T-cell (primary cell): ENCODE measurements at regions of chr18 and their contacts with region 1.

Region 1: DNA sequence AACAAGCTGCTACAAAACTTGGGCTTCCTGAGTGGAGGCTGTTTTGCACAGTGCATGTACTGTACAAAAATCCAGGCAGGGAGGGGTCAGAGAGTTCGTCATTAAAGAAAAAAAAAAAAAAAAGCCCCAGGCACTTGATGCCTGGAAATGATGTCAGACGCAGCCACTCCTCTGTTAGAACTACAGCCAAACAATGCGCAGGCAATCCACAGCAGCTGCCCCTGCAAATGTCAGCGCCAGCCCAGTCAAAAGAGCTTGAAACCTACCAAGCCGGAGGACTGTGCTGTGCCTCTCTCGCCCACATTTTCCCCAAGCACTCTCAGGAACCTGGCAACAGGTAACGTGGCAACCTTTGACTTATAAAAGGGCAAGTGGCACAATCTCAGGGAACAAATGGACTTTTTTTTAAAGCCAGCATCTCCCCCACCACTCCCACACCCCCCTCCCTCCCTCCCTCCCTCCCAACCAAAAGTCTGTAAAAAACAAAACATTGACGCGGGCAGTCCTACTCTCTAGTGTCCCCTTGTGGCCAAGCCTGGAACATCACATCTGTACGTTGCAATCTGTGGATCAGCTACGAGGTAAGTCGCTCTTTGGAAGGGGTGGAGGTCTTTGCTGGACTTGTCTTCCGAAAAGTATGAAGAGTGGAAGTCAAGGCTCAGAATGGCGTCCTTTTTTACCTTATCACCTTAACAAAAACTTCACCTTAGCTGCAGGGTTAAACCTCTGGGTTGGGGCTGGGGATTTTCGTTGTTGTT is 144.1 kb downstream of the TGIF1 start:
- DNase-seq: peak; percentile 76 to 95 (median 88)
- ATAC-seq: peak; percentile 85 to 89 (median 86)
- H3K4me3 ChIP-seq: peak overlapping the region; percentile 58 to 63
- H3K4me3 Mint-ChIP-seq: peak overlapping the region; percentile 87 to 95 (median 91)
- H3K27ac ChIP-seq: peak overlapping the region; percentile 98
- H3K27ac Mint-ChIP-seq: peak overlapping the region; percentile 98 to 99
- H3K4me1 ChIP-seq: peaks cover 27 to 59% of the 10 kb centered on the region in 2 experiments
- H3K4me1 Mint-ChIP-seq: peaks cover 45 to 66% (median 56%) of the 10 kb centered on the region in 3 donors
- H3K27me3 ChIP-seq: no peaks in the 10 kb centered on the region
- H3K27me3 Mint-ChIP-seq: no peaks in the 10 kb centered on the region

Region 2: GRCh38 chr18:3297025-3297984 is 296.8 kb before region 1 on chr18:
- CTCF ChIA-PET with region 1: interaction called, 5 to 31 read pairs
- POLR2A ChIA-PET with region 1: interaction called in 1 of 2 experiments, 12 read pairs
- DNase-seq: peak; percentile 84 to 95 (median 91)
- ATAC-seq: peak; percentile 95 to 100 (median 98)
- H3K4me3 ChIP-seq: peak overlapping the region; percentile 73 to 77
- H3K4me3 Mint-ChIP-seq: peak overlapping the region; percentile 93 to 94 (median 94)
- H3K27ac ChIP-seq: no peak overlapping the region
- H3K27ac Mint-ChIP-seq: peak overlapping the region; percentile 82 to 90
- H3K4me1 ChIP-seq: peaks cover 4 to 14% of the 10 kb centered on the region in 2 experiments
- H3K4me1 Mint-ChIP-seq: peaks cover 11 to 14% (median 13%) of the 10 kb centered on the region in 3 donors
- H3K27me3 ChIP-seq: peaks cover 0 to 4% of the 10 kb centered on the region in 2 experiments
- H3K27me3 Mint-ChIP-seq: peaks cover 29 to 32% of the 10 kb centered on the region in 2 donors

Region 3: DNA sequence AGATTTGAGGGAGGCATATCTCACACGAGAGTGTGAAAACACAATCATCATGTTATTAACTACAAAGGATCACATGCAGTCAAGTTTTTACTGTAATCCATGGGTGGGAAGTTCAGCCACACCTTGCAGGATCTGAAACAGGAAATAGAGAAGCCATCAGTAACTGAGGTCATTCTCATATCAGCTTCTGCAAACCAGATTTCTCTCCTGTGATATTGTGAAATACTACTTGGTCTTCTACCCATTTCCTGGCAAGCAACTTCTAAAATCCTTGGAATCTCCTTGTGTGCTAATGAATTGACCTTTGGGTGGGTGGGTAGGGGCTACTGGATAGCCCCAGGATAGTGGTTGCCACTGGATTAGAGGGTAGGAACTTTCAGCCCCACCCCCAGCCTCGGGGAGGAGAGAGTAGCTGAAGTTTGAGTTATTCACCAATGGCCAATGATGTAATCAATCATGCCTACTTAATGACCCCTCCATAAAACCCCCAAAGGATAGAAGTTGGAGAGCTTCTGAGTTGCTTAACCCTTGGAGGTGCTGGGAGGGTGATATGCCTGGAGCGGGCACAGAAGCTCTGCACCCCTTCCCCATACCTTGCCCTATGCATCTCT is 169.7 kb before region 1 on chr18:
- CTCF ChIA-PET with region 1: interaction called in 1 of 2 experiments, 10 read pairs
- POLR2A ChIA-PET with region 1: no interaction called
- DNase-seq: no peak
- ATAC-seq: no peak
- H3K4me3 ChIP-seq: no peak overlapping the region
- H3K4me3 Mint-ChIP-seq: no peak overlapping the region
- H3K27ac ChIP-seq: no peak overlapping the region
- H3K27ac Mint-ChIP-seq: no peak overlapping the region
- H3K4me1 ChIP-seq: no peaks in the 10 kb centered on the region
- H3K4me1 Mint-ChIP-seq: no peaks in the 10 kb centered on the region
- H3K27me3 ChIP-seq: no peaks in the 10 kb centered on the region
- H3K27me3 Mint-ChIP-seq: no peaks in the 10 kb centered on the region

Region 4: DNA sequence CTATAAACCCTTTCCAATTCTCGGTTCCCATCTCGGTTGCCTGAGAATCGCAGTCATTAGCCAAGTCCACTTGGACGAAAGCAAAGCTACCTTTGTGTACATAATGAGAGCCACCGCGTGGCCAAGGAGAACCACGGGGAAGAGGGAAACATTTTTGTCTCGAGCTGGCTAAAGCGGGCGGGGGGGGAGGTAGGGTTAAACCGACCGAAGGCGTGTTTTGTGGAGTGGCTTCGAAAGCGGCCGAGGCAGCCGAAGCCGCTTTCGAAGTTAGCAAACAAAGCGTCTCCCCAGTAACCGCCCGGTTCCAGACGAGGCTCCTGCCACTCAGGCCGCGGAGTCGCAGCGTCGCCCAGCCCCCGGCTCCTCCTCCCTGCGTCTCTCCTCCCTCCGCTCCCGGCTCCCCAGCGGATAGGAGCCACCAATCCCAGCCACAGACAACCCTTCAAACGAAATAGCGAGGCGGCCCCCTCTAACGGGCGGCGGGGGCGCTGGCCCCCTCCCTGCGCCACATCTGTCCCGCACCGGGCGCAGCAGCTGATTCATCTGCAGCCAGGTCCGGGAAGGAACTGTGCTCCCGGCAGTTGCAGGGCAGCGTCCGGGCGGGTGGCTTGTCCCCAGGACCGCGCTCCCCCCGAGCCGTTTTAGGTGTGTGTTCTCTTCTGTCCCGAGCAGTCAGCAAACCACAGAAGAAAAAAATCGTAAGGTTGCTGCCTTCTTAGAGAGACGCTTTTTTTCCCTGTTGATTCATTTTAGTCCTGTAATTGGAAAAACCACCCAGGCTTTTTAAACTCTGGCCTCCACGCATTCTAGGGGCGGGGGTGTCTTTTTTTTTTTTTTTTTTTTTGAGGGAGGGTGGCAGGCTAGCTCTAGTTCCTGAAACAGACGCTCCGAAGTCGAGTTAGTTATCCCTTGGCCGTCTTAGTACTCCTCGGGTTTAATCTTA is 145.9 kb before region 1 on chr18:
- CTCF ChIA-PET with region 1: interaction called, 4 to 36 read pairs
- POLR2A ChIA-PET with region 1: interaction called, 3 to 28 read pairs
- DNase-seq: peak; percentile 59 to 92 (median 84)
- ATAC-seq: peak; percentile 41 to 63 (median 48)
- H3K4me3 ChIP-seq: peak overlapping the region; percentile 70 to 85
- H3K4me3 Mint-ChIP-seq: peak overlapping the region; percentile 91 to 95 (median 94)
- H3K27ac ChIP-seq: peak overlapping the region; percentile 100
- H3K27ac Mint-ChIP-seq: peak overlapping the region; percentile 99
- H3K4me1 ChIP-seq: peaks cover 11 to 56% of the 10 kb centered on the region in 2 experiments
- H3K4me1 Mint-ChIP-seq: peaks cover 18 to 35% (median 31%) of the 10 kb centered on the region in 3 donors
- H3K27me3 ChIP-seq: no peaks in the 10 kb centered on the region
- H3K27me3 Mint-ChIP-seq: no peaks in the 10 kb centered on the region

Region 5: DNA sequence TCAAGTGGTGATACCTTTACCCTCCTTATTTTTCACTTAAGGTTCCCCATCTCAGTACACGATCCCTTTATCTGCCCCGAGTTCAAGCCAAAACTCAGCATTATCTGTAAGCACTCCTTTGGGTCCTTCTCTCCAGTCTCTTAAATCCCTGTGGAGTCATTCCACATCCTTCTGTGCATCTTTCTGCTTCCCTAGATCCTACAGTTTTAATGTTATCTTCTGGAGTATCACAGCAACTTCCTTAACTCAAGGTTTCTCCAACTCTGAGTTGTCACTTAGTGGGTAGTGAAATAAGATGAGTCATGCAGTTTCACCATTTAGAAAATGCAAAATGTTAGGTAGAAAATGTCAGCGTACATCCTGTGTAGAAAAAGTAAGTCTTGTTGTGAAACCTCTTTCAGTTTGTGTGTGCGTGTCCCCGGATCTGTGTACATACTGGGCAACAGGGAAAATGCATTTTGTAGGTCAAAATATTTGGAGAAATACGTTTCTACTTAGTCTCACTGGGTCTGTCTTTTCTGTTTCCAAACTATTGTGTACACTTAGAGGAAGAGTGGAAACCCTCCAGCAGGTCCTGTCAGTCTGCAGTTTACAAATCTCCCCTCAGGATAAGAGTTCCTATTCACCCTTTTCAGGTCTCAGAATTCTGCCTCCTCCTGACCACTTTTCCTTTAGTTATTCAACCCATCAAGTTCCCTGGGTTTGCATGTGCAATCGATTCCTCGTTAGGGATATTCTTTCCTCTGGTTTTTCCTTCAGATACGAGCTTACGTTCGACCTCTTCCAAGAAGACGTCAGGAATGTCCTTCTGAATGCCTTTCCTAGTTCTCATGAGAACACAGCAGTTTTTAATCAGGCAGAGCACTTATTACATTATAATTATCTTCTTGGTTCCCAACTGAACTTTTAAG is 10.7 kb after region 1 on chr18:
- CTCF ChIA-PET with region 1: interaction called, 4 to 33 read pairs
- POLR2A ChIA-PET with region 1: interaction called, 6 to 24 read pairs
- DNase-seq: peak in 1 of 35 experiments; percentile 68
- ATAC-seq: peak; percentile 66 to 78 (median 75)
- H3K4me3 ChIP-seq: peak overlapping the region; percentile 25 to 50
- H3K4me3 Mint-ChIP-seq: no peak overlapping the region
- H3K27ac ChIP-seq: peak overlapping the region; percentile 85
- H3K27ac Mint-ChIP-seq: no peak overlapping the region
- H3K4me1 ChIP-seq: peaks cover 44 to 45% of the 10 kb centered on the region in 2 experiments
- H3K4me1 Mint-ChIP-seq: peaks cover 12 to 23% (median 13%) of the 10 kb centered on the region in 3 donors
- H3K27me3 ChIP-seq: no peaks in the 10 kb centered on the region
- H3K27me3 Mint-ChIP-seq: no peaks in the 10 kb centered on the region